Dendritic cell treated with granulocyte-macrophage colony-stimulating factor and Interleukin-4, amounts not matched to agents 40 ng/mL and 50 ng/mL, for 4 days (primary cell): ENCODE measurements at regions of chr1 and their contacts with region 1.

Region 1: GRCh38 chr1:167066333-167067122 is 23.6 kb downstream of the GPA33 start:
- H3K4me3 Mint-ChIP-seq: peak overlapping the region; percentile 60
- H3K27ac Mint-ChIP-seq: no peak overlapping the region
- H3K4me1 Mint-ChIP-seq: peaks cover 5% of the 10 kb centered on the region
- H3K27me3 Mint-ChIP-seq: no peaks in the 10 kb centered on the region

Region 2: GRCh38 chr1:166612886-166613285 is 453.6 kb before region 1 on chr1:
- intact Hi-C with region 1: no loop called
- H3K4me3 Mint-ChIP-seq: no peak overlapping the region
- H3K27ac Mint-ChIP-seq: no peak overlapping the region
- H3K4me1 Mint-ChIP-seq: no peaks in the 10 kb centered on the region
- H3K27me3 Mint-ChIP-seq: no peaks in the 10 kb centered on the region

Region 3: GRCh38 chr1:166952002-166952746 is 114.4 kb before region 1 on chr1:
- intact Hi-C with region 1: no loop called
- H3K4me3 Mint-ChIP-seq: no peak overlapping the region
- H3K27ac Mint-ChIP-seq: no peak overlapping the region
- H3K4me1 Mint-ChIP-seq: peaks cover 7% of the 10 kb centered on the region
- H3K27me3 Mint-ChIP-seq: peaks cover 13% of the 10 kb centered on the region

Region 4: DNA sequence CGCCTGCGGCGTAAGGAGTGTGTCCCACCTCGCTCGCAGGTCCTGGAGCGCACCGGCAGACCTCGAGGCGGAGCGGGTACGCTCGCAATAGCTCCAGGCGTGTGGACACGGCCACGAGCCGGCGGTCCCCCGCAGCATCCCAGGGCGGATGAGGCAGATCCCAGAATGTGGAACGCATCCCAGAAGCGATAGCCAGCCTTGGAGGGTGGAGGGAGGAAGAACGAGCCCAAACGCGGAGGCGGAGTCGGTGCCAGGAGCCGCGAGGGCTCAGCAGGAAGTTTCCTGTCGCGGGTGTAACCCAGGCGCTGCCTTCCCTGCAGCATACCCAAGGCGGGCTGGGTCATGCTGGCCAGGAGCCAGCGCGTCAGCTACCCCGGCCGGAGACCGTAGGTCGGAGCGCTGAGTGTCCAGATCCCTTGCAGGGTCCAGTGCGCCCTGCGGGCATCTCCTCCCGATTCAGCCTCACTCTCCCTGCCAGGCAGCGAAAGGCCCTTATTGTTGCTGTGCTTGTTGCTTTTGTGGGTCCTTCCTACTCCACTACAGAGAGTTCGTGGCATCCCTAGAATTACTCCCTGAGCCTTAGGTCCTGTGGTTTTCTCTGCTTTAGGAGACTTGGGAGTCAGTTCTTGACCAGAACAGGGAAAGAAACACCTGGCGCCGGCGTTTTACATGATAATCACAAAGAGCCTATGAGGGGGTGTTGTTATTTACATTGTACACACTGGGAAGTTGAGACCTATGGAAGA is 55.0 kb after region 1 on chr1:
- intact Hi-C with region 1: loop called (anchors 1 kb)
- H3K4me3 Mint-ChIP-seq: peak overlapping the region; percentile 71
- H3K27ac Mint-ChIP-seq: no peak overlapping the region
- H3K4me1 Mint-ChIP-seq: peaks cover 7% of the 10 kb centered on the region
- H3K27me3 Mint-ChIP-seq: peaks cover 17% of the 10 kb centered on the region

Region 5: DNA sequence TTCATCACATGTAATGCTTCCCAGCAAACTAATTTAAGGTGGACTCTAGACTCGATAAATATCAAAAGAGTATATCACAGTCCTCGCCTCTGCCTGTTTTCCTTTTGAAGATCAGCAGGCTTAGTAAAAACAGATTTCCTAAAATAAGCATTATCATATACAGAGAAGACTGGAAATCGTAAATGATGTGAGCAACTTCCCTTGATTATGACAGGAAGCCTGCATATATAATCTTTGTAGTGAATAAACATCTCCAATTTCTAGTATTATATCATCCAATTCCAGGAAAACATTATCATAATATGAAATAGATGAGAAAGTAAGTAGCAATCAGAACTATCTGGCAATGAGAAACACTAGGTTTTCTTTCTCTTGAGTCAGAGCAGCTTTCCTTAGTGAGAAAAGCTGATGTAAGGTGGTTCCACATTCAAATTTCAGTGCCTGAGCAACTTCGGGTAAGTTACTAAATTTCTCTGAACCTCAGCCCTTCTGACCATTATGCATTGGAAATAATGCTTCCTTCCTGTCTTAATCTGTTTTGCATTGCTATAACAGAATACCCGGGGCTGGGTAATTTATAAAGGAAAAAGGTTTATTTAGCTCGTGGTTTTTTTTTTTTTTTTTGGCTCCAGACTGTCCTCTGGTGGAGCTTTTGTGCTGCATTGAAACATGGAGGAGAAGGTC is 141.6 kb after region 1 on chr1:
- intact Hi-C with region 1: loop called (anchors 5 kb)
- H3K4me3 Mint-ChIP-seq: peak overlapping the region; percentile 42
- H3K27ac Mint-ChIP-seq: no peak overlapping the region
- H3K4me1 Mint-ChIP-seq: no peaks in the 10 kb centered on the region
- H3K27me3 Mint-ChIP-seq: peaks cover 2% of the 10 kb centered on the region

Region 6: DNA sequence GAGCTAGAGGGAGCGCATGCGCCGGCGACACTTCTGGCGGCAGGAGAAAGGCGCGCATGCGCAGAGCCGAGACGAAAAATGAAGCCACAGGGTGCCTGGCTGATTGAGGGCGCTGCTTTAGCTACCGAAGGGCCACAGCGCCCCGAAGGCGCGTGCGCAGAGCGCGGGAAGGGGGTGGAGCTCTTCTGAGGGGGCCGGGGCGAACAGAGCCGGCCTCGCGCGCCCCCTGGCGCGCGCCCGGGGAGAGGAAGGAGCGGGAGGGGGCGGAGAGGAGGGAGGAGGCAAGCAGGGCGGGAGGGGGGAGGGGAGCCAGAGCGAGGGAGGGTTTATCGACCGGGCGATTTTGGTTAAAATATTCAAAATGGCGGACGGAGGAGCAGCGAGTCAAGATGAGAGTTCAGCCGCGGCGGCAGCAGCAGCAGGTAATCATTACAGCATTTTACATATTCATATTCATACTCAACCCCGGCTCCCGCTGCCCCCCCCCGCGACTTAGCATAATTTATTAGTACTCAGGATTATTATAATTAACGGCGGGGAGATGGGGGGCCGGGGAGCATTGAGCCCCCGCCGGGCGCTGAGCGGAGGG is 154.1 kb after region 1 on chr1 and contains the start of gene POU2F1:
- intact Hi-C with region 1: loop called (anchors 5 kb)
- H3K4me3 Mint-ChIP-seq: peak within 1 kb of the TSS; percentile 83
- H3K27ac Mint-ChIP-seq: peak within 1 kb of the TSS; percentile 94
- H3K4me1 Mint-ChIP-seq: peaks cover 16% of the 10 kb centered on the region
- H3K27me3 Mint-ChIP-seq: no peaks in the 10 kb centered on the region

Region 7: GRCh38 chr1:167273027-167273800 is 206.7 kb after region 1 on chr1:
- intact Hi-C with region 1: loop called (anchors 2 kb)
- H3K4me3 Mint-ChIP-seq: no peak overlapping the region
- H3K27ac Mint-ChIP-seq: no peak overlapping the region
- H3K4me1 Mint-ChIP-seq: peaks cover 63% of the 10 kb centered on the region
- H3K27me3 Mint-ChIP-seq: no peaks in the 10 kb centered on the region

Region 8: DNA sequence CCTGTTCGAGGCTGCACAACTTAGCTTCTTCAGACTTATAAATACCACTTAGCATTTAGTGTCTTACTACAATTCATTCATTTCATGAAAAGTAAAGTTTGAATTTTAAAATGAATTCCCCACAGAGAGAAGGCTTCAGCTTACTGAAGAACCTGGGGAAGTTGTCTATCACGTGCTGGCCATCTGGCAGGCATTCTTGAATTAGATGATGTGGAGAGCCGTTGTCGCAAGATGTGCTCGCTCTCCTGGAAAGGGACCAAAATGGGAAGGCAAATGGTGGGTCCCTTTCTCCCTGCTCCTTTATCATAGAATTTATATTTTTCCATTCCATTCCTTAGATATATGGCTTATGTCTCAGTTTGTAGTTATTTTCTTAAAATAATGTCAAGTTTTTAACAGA is 361.3 kb after region 1 on chr1:
- intact Hi-C with region 1: no loop called
- H3K4me3 Mint-ChIP-seq: no peak overlapping the region
- H3K27ac Mint-ChIP-seq: no peak overlapping the region
- H3K4me1 Mint-ChIP-seq: peaks cover 13% of the 10 kb centered on the region
- H3K27me3 Mint-ChIP-seq: no peaks in the 10 kb centered on the region

Region 9: GRCh38 chr1:167442124-167442848 is 375.8 kb after region 1 on chr1:
- intact Hi-C with region 1: loop called (anchors 5 kb)
- H3K4me3 Mint-ChIP-seq: no peak overlapping the region
- H3K27ac Mint-ChIP-seq: peak overlapping the region; percentile 54
- H3K4me1 Mint-ChIP-seq: peaks cover 43% of the 10 kb centered on the region
- H3K27me3 Mint-ChIP-seq: peaks cover 27% of the 10 kb centered on the region

Region 10: GRCh38 chr1:167533851-167534300 is 467.3 kb after region 1 on chr1:
- intact Hi-C with region 1: loop called (anchors 5 kb)
- H3K4me3 Mint-ChIP-seq: no peak overlapping the region
- H3K27ac Mint-ChIP-seq: no peak overlapping the region
- H3K4me1 Mint-ChIP-seq: peaks cover 31% of the 10 kb centered on the region
- H3K27me3 Mint-ChIP-seq: no peaks in the 10 kb centered on the region